Activated B cell treated with CpG ODN at 0.5 μM for 24 hours (primary cell): ENCODE measurements at regions of chr18 and their contacts with region 1.

Region 1: DNA sequence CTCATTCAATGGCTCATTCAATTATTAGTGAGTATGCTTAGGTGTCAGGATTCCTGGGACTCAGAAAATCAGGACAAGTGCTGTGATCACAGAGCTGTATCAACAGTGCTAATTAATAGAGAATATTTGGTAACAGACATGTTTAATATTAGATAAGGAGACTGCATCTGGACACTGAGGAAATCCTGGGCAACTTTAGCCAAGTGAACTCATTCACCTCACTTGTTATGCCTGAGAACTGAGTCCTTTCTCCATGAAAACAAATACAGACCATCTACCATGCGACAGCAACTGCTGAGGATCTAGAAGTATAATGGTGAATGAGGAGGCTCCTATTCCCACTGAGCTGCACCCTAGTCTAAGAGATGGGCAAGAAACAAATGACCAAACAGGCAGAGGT is 23.1 kb upstream of the ATP8B1 start:
- DNase-seq: no peak
- ATAC-seq: no peak
- H3K4me3 Mint-ChIP-seq: no peak overlapping the region
- H3K27ac Mint-ChIP-seq: no peak overlapping the region
- H3K4me1 Mint-ChIP-seq: peaks cover under 1% of the 10 kb centered on the region
- H3K27me3 Mint-ChIP-seq: no peaks in the 10 kb centered on the region
- CTCF ChIP-seq: no peak

Region 2: GRCh38 chr18:57267368-57267925 is 558.8 kb before region 1 on chr18:
- CTCF ChIA-PET with region 1: no interaction called
- POLR2A ChIA-PET with region 1: no interaction called
- intact Hi-C with region 1: no loop called
- DNase-seq: no peak
- ATAC-seq: no peak
- H3K4me3 Mint-ChIP-seq: no peak overlapping the region
- H3K27ac Mint-ChIP-seq: no peak overlapping the region
- H3K4me1 Mint-ChIP-seq: no peaks in the 10 kb centered on the region
- H3K27me3 Mint-ChIP-seq: peaks cover 2% of the 10 kb centered on the region
- CTCF ChIP-seq: no peak

Region 3: GRCh38 chr18:57846258-57846657 is 20.0 kb after region 1 on chr18:
- CTCF ChIA-PET with region 1: no interaction called
- POLR2A ChIA-PET with region 1: interaction called, 10 read pairs
- intact Hi-C with region 1: no loop called
- DNase-seq: no peak
- ATAC-seq: no peak
- H3K4me3 Mint-ChIP-seq: no peak overlapping the region
- H3K27ac Mint-ChIP-seq: no peak overlapping the region
- H3K4me1 Mint-ChIP-seq: peaks cover 22% of the 10 kb centered on the region
- H3K27me3 Mint-ChIP-seq: no peaks in the 10 kb centered on the region
- CTCF ChIP-seq: no peak